Heart left ventricle (tissue), 16 donors: ENCODE measurements at regions of chr10 and their contacts with region 1.

Region 1: GRCh38 chr10:93515071-93516005 is 18.9 kb downstream of the CEP55 start:
- DNase-seq: no peak
- ATAC-seq: peak in 3 of 4 donors; percentile 42 to 86 (median 69)
- H3K4me3 ChIP-seq: no peak overlapping the region
- H3K27ac ChIP-seq: peak overlapping the region in 6 of 12 donors; percentile 30 to 91 (median 43)
- H3K4me1 ChIP-seq: peaks cover 0 to 35% (median 1%) of the 10 kb centered on the region in 12 donors
- H3K27me3 ChIP-seq: no peaks in the 10 kb centered on the region
- CTCF ChIP-seq: no peak
- POLR2A ChIP-seq: no peak

Region 2: DNA sequence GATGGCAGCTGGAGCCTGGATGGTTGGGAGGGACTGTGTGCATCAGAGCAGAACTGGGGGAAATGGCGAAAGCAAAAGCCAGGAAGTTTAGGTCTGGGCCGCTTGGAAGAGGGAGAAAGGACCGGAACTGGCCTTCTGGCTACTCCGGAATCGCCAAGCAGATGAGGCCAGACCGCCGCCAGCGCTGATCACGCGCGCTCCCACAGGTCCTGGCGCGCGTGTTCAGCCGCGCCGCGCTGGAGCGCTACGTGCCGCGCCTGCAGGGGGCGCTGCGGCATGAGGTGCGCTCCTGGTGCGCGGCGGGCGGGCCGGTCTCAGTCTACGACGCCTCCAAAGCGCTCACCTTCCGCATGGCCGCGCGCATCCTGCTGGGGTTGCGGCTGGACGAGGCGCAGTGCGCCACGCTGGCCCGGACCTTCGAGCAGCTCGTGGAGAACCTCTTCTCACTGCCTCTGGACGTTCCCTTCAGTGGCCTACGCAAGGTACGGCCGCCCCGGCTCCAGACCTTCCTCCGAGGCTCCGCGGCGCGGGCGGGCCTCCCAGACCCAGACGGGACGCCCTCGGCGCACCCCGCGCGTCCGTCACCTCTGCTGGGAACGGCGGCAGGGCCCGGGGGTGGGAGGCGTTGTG is 452.7 kb before region 1 on chr10:
- intact Hi-C with region 1: loop called in 1 of 10 experiments (anchors 10 kb)
- DNase-seq: no peak
- ATAC-seq: peak in 3 of 4 donors; percentile 52 to 66 (median 56)
- H3K4me3 ChIP-seq: peak overlapping the region in 11 of 12 donors; percentile 18 to 48 (median 38)
- H3K27ac ChIP-seq: no peak overlapping the region
- H3K4me1 ChIP-seq: peaks cover 4 to 44% (median 21%) of the 10 kb centered on the region in 12 donors
- H3K27me3 ChIP-seq: peaks cover 32 to 97% (median 74%) of the 10 kb centered on the region in 9 donors
- CTCF ChIP-seq: peak; percentile 22 to 56 (median 42)
- POLR2A ChIP-seq: no peak

Region 3: GRCh38 chr10:93485690-93486089 is 29.6 kb before region 1 on chr10:
- intact Hi-C with region 1: no loop called
- DNase-seq: no peak
- ATAC-seq: no peak
- H3K4me3 ChIP-seq: no peak overlapping the region
- H3K27ac ChIP-seq: no peak overlapping the region
- H3K4me1 ChIP-seq: peaks cover 0 to 10% (median 1%) of the 10 kb centered on the region in 12 donors
- H3K27me3 ChIP-seq: no peaks in the 10 kb centered on the region
- CTCF ChIP-seq: no peak
- POLR2A ChIP-seq: no peak

Region 4: DNA sequence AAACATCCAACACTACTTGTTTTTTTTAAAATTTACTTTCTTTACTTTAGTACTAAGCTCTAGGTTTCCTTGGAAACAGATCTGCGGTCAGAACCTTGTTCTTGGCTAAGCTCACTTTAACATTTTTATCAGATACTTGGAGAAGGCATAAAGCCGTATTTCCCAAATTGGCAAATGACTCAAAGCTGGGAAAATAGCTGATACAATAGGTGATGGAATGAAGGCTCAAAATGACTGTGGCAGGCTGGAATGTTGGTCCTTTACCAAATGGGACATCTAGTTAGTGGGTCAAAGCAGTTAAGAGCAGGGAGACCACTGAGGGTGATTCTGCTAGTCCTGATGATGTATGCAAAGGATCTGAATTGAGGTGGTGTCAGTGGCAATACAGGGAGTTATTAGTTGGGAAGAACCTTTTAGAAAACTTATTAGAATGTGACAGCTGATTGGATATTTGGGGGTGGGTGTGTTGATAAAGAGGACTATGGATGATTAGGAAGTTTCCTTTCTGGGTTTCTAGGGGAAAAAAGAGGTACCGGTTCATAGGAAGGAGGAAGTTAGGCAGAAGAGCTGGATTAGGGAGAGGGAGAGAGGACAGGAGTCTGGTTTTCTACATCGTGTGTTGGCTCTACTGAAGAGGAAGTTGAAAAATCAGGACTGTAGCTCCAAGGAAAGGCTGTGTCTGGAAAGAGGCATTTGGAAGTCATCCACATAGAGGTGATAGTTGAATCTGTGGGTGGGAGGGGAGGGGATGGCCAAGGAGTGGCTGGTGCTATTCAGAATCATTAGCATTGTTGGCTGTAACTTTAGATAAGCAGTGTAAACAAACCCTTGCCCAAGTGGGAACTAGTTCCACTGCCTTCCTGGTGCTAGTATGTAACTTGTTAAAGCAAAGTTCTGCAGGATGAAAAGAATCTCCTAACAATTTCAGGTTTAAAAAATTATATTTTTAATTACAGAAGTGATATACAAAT is 491.5 kb after region 1 on chr10:
- intact Hi-C with region 1: no loop called
- DNase-seq: peak in 1 of 5 donors; percentile 16
- ATAC-seq: peak; percentile 62 to 81 (median 68)
- H3K4me3 ChIP-seq: no peak overlapping the region
- H3K27ac ChIP-seq: peak overlapping the region in 8 of 12 donors; percentile 37 to 85 (median 66)
- H3K4me1 ChIP-seq: peaks cover 0 to 33% (median 6%) of the 10 kb centered on the region in 12 donors
- H3K27me3 ChIP-seq: no peaks in the 10 kb centered on the region
- CTCF ChIP-seq: no peak
- POLR2A ChIP-seq: no peak